Left ventricle myocardium inferior (tissue), 1 donor: ENCODE measurements at regions of chr5 and their contacts with region 1.

Region 1: GRCh38 chr5:88680253-88681132 is 202.5 kb downstream of the MEF2C start:
- DNase-seq: peak; percentile 66
- H3K4me3 ChIP-seq: peak overlapping the region; percentile 58
- H3K27ac ChIP-seq: no peak overlapping the region
- H3K4me1 ChIP-seq: peaks cover 35% of the 10 kb centered on the region
- H3K27me3 ChIP-seq: peaks cover 99% of the 10 kb centered on the region
- CTCF ChIP-seq: peak; percentile 95

Region 2: DNA sequence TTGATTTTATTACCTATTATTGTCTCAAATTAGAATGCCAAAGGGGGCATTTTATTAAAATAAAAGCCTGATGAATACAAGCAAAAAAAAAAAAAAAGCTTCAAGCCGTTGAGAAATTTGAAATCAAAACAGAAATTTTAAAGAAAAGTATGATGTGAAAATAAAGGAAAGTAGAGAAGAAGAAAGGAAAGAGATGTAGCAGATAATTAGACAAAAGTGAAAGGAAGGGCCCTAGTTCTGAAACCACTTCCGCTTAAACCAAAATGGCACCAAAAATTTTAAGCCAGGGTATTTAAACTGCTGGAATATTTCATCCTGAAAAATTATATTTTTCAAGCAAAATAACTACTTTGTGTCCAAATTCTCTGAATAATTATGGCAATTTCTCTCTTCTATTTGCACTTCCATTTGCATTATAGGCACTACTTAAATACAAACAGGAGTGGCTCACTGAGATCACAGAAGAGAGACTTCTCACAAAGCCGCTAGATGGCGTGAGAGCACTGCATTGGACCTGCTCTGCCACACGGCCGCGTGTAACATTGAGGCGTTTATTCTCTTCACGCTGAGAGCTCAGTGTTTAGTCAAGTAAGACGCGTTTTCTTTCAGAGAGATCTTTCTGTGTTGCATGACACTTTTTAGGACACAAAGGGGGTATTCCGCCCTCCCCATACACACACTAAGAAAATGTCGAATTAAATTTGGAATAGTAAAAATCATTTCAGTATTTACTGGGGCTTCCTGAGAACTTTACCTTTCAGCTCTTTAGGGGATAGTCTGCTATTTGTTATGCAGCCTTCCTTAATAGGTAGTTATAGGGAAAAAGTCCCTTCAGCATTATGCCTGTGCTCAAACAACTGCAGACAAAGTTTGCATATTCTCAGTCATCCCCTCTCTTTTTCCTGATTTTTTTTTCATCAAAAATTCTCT is 899.4 kb before region 1 on chr5:
- intact Hi-C with region 1: loop called (anchors 5 kb)
- DNase-seq: peak; percentile 55
- H3K4me3 ChIP-seq: no peak overlapping the region
- H3K27ac ChIP-seq: no peak overlapping the region
- H3K4me1 ChIP-seq: no peaks in the 10 kb centered on the region
- H3K27me3 ChIP-seq: peaks cover 86% of the 10 kb centered on the region
- CTCF ChIP-seq: peak; percentile 96

Region 3: DNA sequence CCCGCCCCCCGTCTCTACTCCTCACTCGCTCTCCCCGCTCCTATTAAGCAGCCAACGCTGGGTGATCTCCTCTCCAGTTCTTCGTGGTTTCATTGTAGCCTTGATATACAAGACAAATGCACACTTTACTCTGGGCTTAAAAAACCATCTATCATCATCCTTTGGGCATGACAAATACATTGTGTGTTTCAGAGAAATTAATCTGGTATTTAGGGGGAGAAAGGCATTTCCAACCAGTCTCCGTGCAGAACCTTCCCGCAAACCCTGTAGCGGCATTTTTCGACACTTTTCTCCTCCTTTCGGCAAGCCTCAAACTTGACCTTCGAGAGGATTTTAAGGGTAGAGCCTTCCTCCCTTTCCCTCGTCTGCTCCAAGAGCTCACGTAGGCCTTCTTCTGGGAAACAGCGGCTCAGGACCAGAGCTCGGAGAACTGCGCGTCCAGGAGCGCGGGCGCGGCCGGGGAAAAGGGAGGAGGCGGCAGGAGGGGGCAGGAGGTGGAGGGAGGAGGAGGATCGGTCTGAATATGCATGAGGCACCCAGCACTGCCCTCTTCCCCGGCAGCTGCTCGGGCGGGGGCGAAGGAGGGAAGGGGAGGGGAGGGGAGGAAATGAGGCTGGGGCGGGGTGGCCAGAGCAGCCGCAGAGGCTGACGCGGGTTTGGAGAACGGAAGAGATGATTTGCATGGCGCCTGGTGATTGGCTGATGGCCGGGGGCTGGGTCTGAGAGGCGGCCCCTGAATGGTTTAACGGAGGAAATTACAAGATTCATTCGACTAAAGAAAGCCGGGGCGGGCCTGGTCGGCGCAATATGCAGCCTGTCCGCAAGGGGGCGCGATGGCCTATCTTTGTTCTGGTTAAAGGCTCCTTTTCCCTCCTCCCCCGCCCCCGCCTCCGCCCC is 539.4 kb before region 1 on chr5:
- intact Hi-C with region 1: loop called (anchors 10 kb)
- DNase-seq: peak; percentile 95
- H3K4me3 ChIP-seq: peak overlapping the region; percentile 68
- H3K27ac ChIP-seq: peak overlapping the region; percentile 56
- H3K4me1 ChIP-seq: peaks cover 51% of the 10 kb centered on the region
- H3K27me3 ChIP-seq: peaks cover 56% of the 10 kb centered on the region
- CTCF ChIP-seq: peak; percentile 77